OCI-LY7 (cell line): ENCODE measurements at regions of chr2 and their contacts with region 1.

Region 1: GRCh38 chr2:180980106-180980942 is at the start of gene UBE2E3:
- DNase-seq: peak; percentile 81
- H3K4me3 ChIP-seq: peak within 1 kb of the TSS; percentile 88
- H3K27ac ChIP-seq: no peak within 1 kb of the TSS
- H3K4me1 ChIP-seq: peaks cover 38% of the 10 kb centered on the region
- CTCF ChIP-seq: peak; percentile 73
- total RNA-seq, gene UBE2E3: 26.4 and 33.7 TPM in 2 replicates

Region 2: GRCh38 chr2:180959787-180960186 is 20.5 kb before region 1 on chr2:
- CTCF ChIA-PET with region 1: no interaction called
- POLR2A ChIA-PET with region 1: interaction called, 4 read pairs
- intact Hi-C with region 1: loop called (anchors 2 kb)
- DNase-seq: no peak
- H3K4me3 ChIP-seq: no peak overlapping the region
- H3K27ac ChIP-seq: no peak overlapping the region
- H3K4me1 ChIP-seq: no peaks in the 10 kb centered on the region
- CTCF ChIP-seq: no peak

Region 3: DNA sequence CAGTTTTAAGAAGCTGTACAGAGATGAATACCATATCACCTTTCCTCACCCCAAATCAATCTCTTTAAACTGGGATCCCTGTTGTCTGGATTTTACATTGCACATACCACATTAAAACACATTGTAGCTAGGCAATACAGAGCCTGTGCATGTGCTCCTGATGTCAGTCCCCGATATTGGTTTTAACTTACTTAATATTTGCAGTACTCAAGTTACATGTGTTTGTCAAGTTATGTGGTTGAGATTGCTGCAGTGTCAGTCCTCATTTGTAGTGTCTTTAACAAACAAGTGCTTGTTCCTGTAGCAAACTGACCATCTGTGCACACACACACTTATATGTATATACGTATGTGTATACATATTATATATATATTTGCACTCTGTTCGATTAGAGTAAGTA is 10.3 kb before region 1 on chr2:
- CTCF ChIA-PET with region 1: interaction called, 3 read pairs
- POLR2A ChIA-PET with region 1: interaction called, 20 read pairs
- intact Hi-C with region 1: no loop called
- DNase-seq: no peak
- H3K4me3 ChIP-seq: no peak overlapping the region
- H3K27ac ChIP-seq: no peak overlapping the region
- H3K4me1 ChIP-seq: no peaks in the 10 kb centered on the region
- CTCF ChIP-seq: no peak